ENCODE measurements at regions of chr7 and their contacts with region 1.

Region 1: DNA sequence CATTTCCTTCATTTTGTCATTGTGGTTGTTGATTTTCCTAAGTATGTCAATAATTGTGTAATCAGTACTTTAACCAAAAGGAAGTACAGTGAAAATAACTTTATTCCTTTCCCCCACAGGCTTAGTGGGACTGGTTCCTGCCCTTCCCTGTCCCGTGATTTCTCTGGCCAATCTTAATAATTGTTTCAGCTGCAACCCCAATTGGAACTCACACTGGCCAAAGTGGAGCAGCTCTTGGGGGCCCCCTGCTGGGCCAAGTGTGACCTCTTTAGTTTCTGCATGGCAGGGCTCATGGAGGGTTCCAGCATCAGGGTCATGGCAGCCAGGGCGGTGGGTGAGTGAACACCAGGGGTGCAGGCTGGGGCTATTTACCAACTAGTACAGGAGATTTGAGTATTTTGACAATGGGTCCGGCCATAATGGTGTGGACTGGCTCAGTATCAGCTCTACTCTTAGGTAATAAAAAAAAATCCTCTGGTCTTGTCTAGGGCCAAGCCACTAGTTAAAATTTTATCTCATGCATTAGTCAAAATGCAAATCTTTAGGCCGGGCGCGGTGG is 31.7 kb downstream of the CYCS start:
- DNase-seq: peak; percentile 86 to 90
- ATAC-seq: peak; percentile 94
- H3K4me3 ChIP-seq: peak overlapping the region; percentile 55
- H3K27ac ChIP-seq: peak overlapping the region; percentile 78 to 79
- H3K4me1 ChIP-seq: peaks cover 9% of the 10 kb centered on the region; the same call in 1 of the 3 replicates
- CTCF ChIP-seq: peak; percentile 86
- EP300 ChIP-seq: no peak
- POLR2A ChIP-seq: no peak
- RAD21 ChIP-seq: peak; percentile 83 to 88

Region 2: GRCh38 chr7:24812310-24812945 is 280.9 kb before region 1 on chr7:
- CTCF ChIA-PET with region 1: interaction called, 280 read pairs
- POLR2A ChIA-PET with region 1: interaction called, 3 read pairs
- DNase-seq: peak; percentile 40 to 50
- ATAC-seq: peak; percentile 96 to 97
- H3K4me3 ChIP-seq: no peak overlapping the region
- H3K27ac ChIP-seq: no peak overlapping the region
- H3K4me1 ChIP-seq: no peaks in the 10 kb centered on the region
- CTCF ChIP-seq: peak; percentile 87
- EP300 ChIP-seq: no peak
- POLR2A ChIP-seq: no peak
- RAD21 ChIP-seq: peak; percentile 80 to 81

Region 3: GRCh38 chr7:24877790-24878311 is 215.5 kb before region 1 on chr7:
- CTCF ChIA-PET with region 1: interaction called, 16 read pairs
- POLR2A ChIA-PET with region 1: no interaction called
- DNase-seq: no peak
- ATAC-seq: no peak
- H3K4me3 ChIP-seq: no peak overlapping the region
- H3K27ac ChIP-seq: no peak overlapping the region
- H3K4me1 ChIP-seq: peaks cover 10% of the 10 kb centered on the region
- CTCF ChIP-seq: no peak
- EP300 ChIP-seq: no peak
- POLR2A ChIP-seq: no peak
- RAD21 ChIP-seq: no peak

Region 4: DNA sequence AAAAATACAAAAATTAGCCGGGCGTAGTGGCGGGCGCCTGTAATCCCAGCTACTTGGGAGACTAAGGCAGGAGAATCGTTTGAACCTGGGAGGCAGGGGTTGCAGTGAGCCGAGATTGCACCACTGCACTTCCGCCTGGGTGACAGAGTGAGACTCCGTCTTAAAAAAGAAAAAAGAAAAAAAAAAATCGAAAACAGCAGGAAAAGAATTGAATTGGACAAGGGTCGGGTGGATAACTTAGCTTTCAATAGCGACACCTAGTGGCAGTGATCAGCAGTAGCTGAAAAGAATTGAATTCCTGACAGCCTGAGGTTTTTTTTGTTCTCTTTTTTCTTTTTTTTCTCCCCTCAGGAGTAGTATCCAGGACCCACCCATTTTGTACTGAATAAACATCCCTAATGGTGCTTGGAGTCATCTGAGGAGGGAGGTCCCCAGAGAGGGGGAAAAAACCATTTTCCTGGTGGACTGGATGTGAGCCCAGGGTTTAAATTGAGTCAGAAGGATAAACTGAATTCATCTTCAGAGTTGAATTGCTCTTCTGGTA is 23.4 kb before region 1 on chr7:
- CTCF ChIA-PET with region 1: interaction called, 35 read pairs
- POLR2A ChIA-PET with region 1: interaction called, 3 read pairs
- DNase-seq: peak; percentile 82 to 84
- ATAC-seq: peak; percentile 81 to 87
- H3K4me3 ChIP-seq: peak overlapping the region; percentile 41
- H3K27ac ChIP-seq: peak overlapping the region; percentile 63 to 84
- H3K4me1 ChIP-seq: peaks cover 21% of the 10 kb centered on the region
- CTCF ChIP-seq: peak; percentile 95
- EP300 ChIP-seq: no peak
- POLR2A ChIP-seq: no peak
- RAD21 ChIP-seq: peak; percentile 85 to 89

Region 5: GRCh38 chr7:25083201-25083600 is 10.1 kb before region 1 on chr7:
- CTCF ChIA-PET with region 1: interaction called, 35 read pairs
- POLR2A ChIA-PET with region 1: no interaction called
- DNase-seq: no peak
- ATAC-seq: no peak
- H3K4me3 ChIP-seq: no peak overlapping the region
- H3K27ac ChIP-seq: no peak overlapping the region
- H3K4me1 ChIP-seq: no peaks in the 10 kb centered on the region
- CTCF ChIP-seq: no peak
- EP300 ChIP-seq: no peak
- POLR2A ChIP-seq: no peak
- RAD21 ChIP-seq: no peak

Region 6: GRCh38 chr7:25109276-25109675 is 15.9 kb after region 1 on chr7:
- CTCF ChIA-PET with region 1: interaction called, 26 read pairs
- POLR2A ChIA-PET with region 1: no interaction called
- DNase-seq: no peak
- ATAC-seq: no peak
- H3K4me3 ChIP-seq: no peak overlapping the region
- H3K27ac ChIP-seq: no peak overlapping the region
- H3K4me1 ChIP-seq: no peaks in the 10 kb centered on the region
- CTCF ChIP-seq: no peak
- EP300 ChIP-seq: no peak
- POLR2A ChIP-seq: no peak
- RAD21 ChIP-seq: no peak